Natural killer cell (primary cell): ENCODE measurements at regions of chr1 and their contacts with region 1.

Region 1: DNA sequence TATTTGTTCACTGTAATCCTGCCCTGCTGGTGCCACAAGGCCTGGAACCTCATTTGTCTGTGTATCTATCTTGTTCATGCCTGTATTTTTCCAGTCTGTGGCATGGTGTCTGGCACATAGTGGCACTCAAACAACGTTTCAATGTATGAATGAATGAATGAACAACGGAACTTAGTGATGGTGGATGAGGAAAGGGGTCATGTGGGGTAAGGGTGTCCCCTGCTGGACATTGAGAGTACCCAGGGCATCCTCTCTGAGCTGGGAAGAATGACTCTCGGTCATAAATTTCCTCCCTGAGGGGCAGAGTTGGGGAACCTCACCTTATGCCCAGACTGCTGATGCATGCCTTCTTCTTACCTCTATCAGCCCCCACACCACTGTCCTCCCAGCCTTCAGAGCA is 18.9 kb upstream of the ZNF683 start:
- DNase-seq: peak; percentile 35 to 81
- ATAC-seq: peak; percentile 81 to 84 (median 83)
- H3K4me3 ChIP-seq: no peak overlapping the region
- H3K4me3 Mint-ChIP-seq: peak overlapping the region; percentile 14
- H3K27ac ChIP-seq: no peak overlapping the region
- H3K27ac Mint-ChIP-seq: no peak overlapping the region
- H3K4me1 ChIP-seq: peaks cover 32% of the 10 kb centered on the region
- H3K4me1 Mint-ChIP-seq: peaks cover 23 to 30% of the 10 kb centered on the region in 2 donors
- H3K27me3 ChIP-seq: peaks cover 6% of the 10 kb centered on the region
- H3K27me3 Mint-ChIP-seq: peaks cover 28 to 34% of the 10 kb centered on the region in 2 donors
- CTCF ChIP-seq: peak; percentile 77

Region 2: DNA sequence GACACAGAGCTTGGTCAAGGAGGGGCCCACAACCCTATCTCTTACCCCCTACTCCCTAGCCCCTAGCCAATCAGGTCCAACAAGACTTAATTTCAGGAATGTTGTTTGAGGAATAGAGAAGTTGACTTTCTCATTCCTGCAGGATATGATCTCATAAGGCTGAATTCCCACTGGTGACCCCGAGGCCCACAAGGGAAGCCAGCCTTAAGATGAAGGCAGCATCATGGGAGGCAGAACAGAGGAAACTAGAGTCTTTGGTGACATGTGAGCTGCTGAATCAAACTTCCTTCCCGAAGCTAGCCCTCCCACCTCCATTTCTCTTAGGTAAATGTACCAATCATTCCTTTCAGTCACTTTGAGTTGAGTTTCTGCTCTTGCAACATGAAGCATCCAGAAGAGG is 288.9 kb before region 1 on chr1:
- intact Hi-C with region 1: loop called (anchors 10 kb)
- DNase-seq: no peak
- ATAC-seq: no peak
- H3K4me3 ChIP-seq: no peak overlapping the region
- H3K4me3 Mint-ChIP-seq: no peak overlapping the region
- H3K27ac ChIP-seq: no peak overlapping the region
- H3K27ac Mint-ChIP-seq: no peak overlapping the region
- H3K4me1 ChIP-seq: no peaks in the 10 kb centered on the region
- H3K4me1 Mint-ChIP-seq: no peaks in the 10 kb centered on the region
- H3K27me3 ChIP-seq: no peaks in the 10 kb centered on the region
- H3K27me3 Mint-ChIP-seq: peaks cover 3 to 6% of the 10 kb centered on the region in 2 donors
- CTCF ChIP-seq: no peak

Region 3: DNA sequence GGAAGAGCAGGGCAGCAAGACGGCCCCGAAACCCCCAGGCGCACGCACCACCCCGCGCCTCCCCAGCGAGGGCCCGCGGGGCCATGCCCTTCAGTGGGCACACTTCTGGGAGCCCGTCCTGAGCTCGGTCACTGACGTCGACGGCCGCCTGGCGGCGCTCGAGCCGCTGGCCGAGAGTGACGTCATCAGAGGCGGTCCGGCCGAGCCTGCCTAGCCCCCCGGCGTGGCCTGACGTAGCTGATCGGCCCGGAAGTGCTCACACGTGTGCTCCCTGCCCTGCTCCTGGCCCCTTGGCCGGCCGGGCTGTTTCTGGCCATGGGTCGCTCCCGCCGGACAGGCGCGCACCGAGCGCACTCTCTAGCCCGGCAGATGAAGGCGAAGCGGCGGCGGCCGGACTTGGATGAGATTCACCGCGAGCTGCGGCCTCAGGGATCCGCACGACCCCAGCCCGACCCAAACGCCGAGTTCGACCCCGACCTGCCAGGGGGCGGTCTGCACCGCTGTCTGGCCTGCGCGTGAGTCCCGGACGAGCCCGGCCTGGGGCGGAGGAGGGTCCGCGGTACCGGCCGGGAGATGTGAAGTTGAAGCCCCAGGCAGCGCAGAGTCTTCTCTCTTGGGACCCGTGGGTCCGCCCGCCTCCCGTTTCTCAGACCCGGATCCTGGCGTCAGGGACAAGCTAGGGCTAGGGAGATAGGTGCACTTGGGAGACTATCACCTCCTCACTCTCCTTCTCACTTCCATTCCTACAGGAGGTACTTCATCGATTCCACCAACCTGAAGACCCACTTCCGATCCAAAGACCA is 221.6 kb before region 1 on chr1 and contains the start of gene ZNF593:
- intact Hi-C with region 1: loop called (anchors 10 kb)
- DNase-seq: peak; percentile 90 to 92
- ATAC-seq: peak; percentile 94 to 96 (median 96)
- H3K4me3 ChIP-seq: peak within 1 kb of the TSS; percentile 60
- H3K4me3 Mint-ChIP-seq: peak within 1 kb of the TSS; percentile 84
- H3K27ac ChIP-seq: peak within 1 kb of the TSS; percentile 10
- H3K27ac Mint-ChIP-seq: peak within 1 kb of the TSS; percentile 66 to 92
- H3K4me1 ChIP-seq: peaks cover 18% of the 10 kb centered on the region
- H3K4me1 Mint-ChIP-seq: peaks cover 0 to 21% of the 10 kb centered on the region in 2 donors
- H3K27me3 ChIP-seq: no peaks in the 10 kb centered on the region
- H3K27me3 Mint-ChIP-seq: peaks cover 0 to 12% of the 10 kb centered on the region in 2 donors
- CTCF ChIP-seq: peak; percentile 83
- total RNA-seq, gene ZNF593: 8.6 to 17.8 (median 15.6) TPM

Region 4: DNA sequence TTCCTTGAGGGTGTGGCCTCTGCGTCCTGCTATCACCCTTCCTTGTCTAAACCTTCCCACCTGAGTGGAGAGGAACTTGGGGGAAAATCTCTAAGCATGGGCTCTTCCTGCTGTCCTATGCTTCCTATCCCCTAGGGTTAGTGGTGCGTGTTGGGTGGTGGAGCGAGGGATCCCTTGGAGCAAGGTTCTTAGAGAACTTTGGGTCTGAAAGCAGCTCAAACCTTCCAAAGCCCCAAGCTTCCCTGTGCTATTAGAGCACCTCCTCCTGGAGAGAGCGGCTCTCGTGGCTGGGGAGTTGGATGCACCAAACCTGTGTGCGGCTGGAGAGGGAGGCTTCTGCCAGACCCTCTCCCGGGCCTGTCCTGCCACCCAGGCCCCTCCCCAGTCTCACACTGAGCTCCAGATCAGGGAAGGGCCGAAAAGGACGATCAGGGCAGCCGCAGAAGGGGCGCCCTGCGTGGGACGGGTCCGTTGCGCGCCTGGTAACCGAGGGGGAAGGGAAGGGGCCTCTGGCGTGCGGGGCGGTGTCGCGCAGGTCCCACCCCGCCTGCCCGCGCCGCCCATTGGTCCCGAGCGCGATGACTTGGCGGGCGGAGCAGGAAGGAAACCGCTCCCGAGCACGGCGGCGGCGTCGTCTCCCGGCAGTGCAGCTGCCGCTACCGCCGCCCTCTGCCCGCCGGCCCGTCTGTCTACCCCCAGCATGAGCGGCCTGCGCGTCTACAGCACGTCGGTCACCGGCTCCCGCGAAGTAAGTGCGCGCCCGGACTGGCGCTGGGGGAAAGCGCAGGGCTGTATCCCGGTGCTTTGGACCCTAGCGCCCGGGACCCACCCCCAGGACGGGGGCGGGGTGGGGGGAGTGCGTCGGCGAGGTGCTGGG is 111.8 kb before region 1 on chr1 and contains the start of gene SH3BGRL3:
- intact Hi-C with region 1: loop called (anchors 1 kb)
- DNase-seq: peak; percentile 73 to 92
- ATAC-seq: peak; percentile 54 to 80 (median 69)
- H3K4me3 ChIP-seq: peak within 1 kb of the TSS; percentile 88
- H3K4me3 Mint-ChIP-seq: peak within 1 kb of the TSS; percentile 93
- H3K27ac ChIP-seq: peak within 1 kb of the TSS; percentile 85
- H3K27ac Mint-ChIP-seq: peak within 1 kb of the TSS; percentile 82 to 86
- H3K4me1 ChIP-seq: peaks cover 92% of the 10 kb centered on the region
- H3K4me1 Mint-ChIP-seq: peaks cover 75 to 85% of the 10 kb centered on the region in 2 donors
- H3K27me3 ChIP-seq: no peaks in the 10 kb centered on the region
- H3K27me3 Mint-ChIP-seq: no peaks in the 10 kb centered on the region
- CTCF ChIP-seq: no peak
- total RNA-seq, gene SH3BGRL3: 396 to 488 (median 437) TPM

Region 5: GRCh38 chr1:26284597-26285360 is 106.7 kb before region 1 on chr1:
- intact Hi-C with region 1: loop called (anchors 2 kb)
- DNase-seq: peak; percentile 80 to 97
- ATAC-seq: peak; percentile 74 to 87 (median 79)
- H3K4me3 ChIP-seq: no peak overlapping the region
- H3K4me3 Mint-ChIP-seq: peak overlapping the region; percentile 81
- H3K27ac ChIP-seq: peak overlapping the region; percentile 92
- H3K27ac Mint-ChIP-seq: peak overlapping the region; percentile 86 to 96
- H3K4me1 ChIP-seq: peaks cover 97% of the 10 kb centered on the region
- H3K4me1 Mint-ChIP-seq: peaks cover 73 to 90% of the 10 kb centered on the region in 2 donors
- H3K27me3 ChIP-seq: no peaks in the 10 kb centered on the region
- H3K27me3 Mint-ChIP-seq: no peaks in the 10 kb centered on the region
- CTCF ChIP-seq: peak; percentile 61

Region 6: GRCh38 chr1:27049607-27050006 is 658.2 kb after region 1 on chr1:
- intact Hi-C with region 1: no loop called
- DNase-seq: no peak
- ATAC-seq: no peak
- H3K4me3 ChIP-seq: no peak overlapping the region
- H3K4me3 Mint-ChIP-seq: no peak overlapping the region
- H3K27ac ChIP-seq: no peak overlapping the region
- H3K27ac Mint-ChIP-seq: no peak overlapping the region
- H3K4me1 ChIP-seq: peaks cover 11% of the 10 kb centered on the region
- H3K4me1 Mint-ChIP-seq: peaks cover 6% of the 10 kb centered on the region in 2 donors
- H3K27me3 ChIP-seq: no peaks in the 10 kb centered on the region
- H3K27me3 Mint-ChIP-seq: peaks cover 0 to 4% of the 10 kb centered on the region in 2 donors
- CTCF ChIP-seq: no peak